Activated CD4-positive, alpha-beta T cell treated with anti-CD3 and anti-CD28 coated beads, Interleukin-2, amount 10 ng/mL, durations not matched to agents 24 days and 14 days (primary cell): ENCODE measurements at regions of chr16 and their contacts with region 1.

Region 1: DNA sequence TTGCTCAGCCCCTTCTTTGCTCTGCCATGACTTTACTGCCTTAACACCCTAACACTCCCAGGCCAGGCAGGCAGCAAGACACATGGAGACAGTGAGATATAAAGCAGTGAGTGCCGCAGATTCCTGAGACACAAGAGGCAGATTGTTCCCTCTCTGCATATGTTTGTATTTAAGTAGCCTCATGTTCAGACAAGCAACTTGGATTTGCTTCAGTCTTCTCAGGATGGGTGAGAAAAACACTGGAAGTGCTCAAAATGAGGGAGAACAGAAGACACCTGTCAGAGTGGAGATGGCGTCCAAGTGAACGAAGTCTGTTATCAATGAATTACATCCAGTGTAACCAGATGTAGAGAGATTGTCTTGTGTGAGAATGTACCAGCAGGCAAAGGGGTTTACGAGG is 86.8 kb downstream of the CES1 start:
- DNase-seq: no peak
- H3K4me3 Mint-ChIP-seq: no peak overlapping the region
- H3K27ac Mint-ChIP-seq: no peak overlapping the region
- H3K4me1 Mint-ChIP-seq: no peaks in the 10 kb centered on the region
- H3K27me3 Mint-ChIP-seq: peaks cover 11% of the 10 kb centered on the region

Region 2: DNA sequence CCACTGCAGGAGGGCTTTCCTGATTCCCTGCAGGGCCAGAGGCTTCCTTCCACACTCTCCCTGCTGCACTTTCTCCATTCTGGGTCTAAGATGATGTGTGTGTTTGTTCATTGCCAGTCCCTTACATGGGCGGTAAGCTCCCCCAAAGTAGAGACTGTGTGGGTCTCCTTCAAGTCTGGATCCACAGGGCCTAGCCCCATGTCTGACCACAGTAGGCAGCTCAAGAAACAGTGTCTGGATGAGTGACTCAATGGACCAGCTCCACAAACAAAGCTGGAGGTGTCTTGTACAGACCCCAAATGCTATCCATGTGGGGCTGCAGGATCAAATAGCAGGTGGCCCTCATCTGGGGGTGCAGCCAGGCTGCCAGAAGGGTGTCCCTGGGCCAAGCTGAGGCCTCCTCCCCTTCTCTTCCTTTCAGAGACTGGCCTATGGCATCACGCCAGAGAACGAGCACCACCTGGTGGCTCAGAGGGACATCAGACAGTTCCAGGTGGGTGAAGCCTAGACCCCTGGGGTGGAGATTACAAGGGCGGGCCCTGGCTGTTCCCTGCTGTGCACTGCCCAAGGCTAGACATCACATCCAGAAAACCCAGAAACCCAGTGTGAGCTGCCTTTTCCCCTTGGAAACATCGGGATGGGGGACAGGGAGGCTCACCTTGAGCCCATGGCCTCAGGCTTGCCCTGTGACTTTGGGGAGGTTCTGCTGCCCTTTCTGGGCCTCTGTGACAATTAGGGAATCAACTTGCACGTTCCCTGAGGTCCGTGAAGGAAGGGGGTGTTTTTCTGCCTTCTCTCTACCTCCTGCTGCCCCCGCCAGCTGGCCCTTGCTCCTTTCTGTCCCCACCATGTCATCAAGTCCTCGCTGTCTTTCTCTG is 44.4 kb before region 1 on chr16:
- intact Hi-C with region 1: no loop called
- DNase-seq: peak; percentile 79
- H3K4me3 Mint-ChIP-seq: no peak overlapping the region
- H3K27ac Mint-ChIP-seq: no peak overlapping the region
- H3K4me1 Mint-ChIP-seq: peaks cover 3% of the 10 kb centered on the region
- H3K27me3 Mint-ChIP-seq: peaks cover 2% of the 10 kb centered on the region

Region 3: GRCh38 chr16:55824473-55825000 is 78.5 kb after region 1 on chr16:
- intact Hi-C with region 1: loop called (anchors 10 kb)
- DNase-seq: no peak
- H3K4me3 Mint-ChIP-seq: no peak overlapping the region
- H3K27ac Mint-ChIP-seq: no peak overlapping the region
- H3K4me1 Mint-ChIP-seq: no peaks in the 10 kb centered on the region
- H3K27me3 Mint-ChIP-seq: no peaks in the 10 kb centered on the region